GM12878 (cell line): ENCODE measurements at regions of chr5 and their contacts with region 1.

Region 1: GRCh38 chr5:127572930-127573329 is 55.5 kb downstream of the PRRC1 start:
- DNase-seq: no peak
- ATAC-seq: peak; percentile 62
- H3K4me3 ChIP-seq: no peak overlapping the region
- H3K27ac ChIP-seq: no peak overlapping the region
- H3K4me1 ChIP-seq: peaks cover 18% of the 10 kb centered on the region
- H3K27me3 ChIP-seq: no peaks in the 10 kb centered on the region
- CTCF ChIP-seq: peak; percentile 7 to 33 (median 17); a peak in 2 of 6 replicates
- EP300 ChIP-seq: no peak
- POLR2A ChIP-seq: no peak
- RAD21 ChIP-seq: peak; percentile 32; the same call in 1 of the 2 replicates

Region 2: DNA sequence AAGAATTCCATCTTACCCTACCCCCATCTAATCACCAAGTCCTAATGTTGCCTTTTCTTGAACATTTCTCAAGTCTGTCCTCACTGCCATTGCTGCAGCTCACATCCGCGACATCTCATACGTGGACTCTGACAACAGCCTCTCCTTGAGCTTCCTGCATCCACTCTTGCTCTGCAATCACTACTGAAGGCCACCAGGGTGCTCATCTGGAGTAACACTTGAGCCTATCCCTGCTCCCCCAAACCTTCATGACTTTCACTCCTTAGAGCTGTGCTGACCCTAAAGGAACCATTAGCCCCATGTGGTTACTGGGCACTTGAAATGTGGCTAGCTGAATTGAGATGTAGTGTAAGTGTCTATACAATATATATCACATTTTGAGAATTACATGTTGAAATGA is 29.6 kb after region 1 on chr5:
- CTCF ChIA-PET with region 1: interaction called, 10 read pairs
- POLR2A ChIA-PET with region 1: no interaction called
- RAD21 ChIA-PET with region 1: interaction called, 9 read pairs
- SMC1A ChIA-PET with region 1: interaction called, 14 read pairs
- in situ Hi-C with region 1: no loop called
- intact Hi-C with region 1: no loop called
- DNase-seq: no peak
- ATAC-seq: peak; percentile 38
- H3K4me3 ChIP-seq: no peak overlapping the region
- H3K27ac ChIP-seq: no peak overlapping the region
- H3K4me1 ChIP-seq: no peaks in the 10 kb centered on the region
- H3K27me3 ChIP-seq: 0 out of 4 replicates have a peak, but pooled peaks cover 0 to 3% of the 10 kb centered on the region in 2 experiments
- CTCF ChIP-seq: no peak
- EP300 ChIP-seq: no peak
- POLR2A ChIP-seq: no peak
- RAD21 ChIP-seq: no peak

Region 3: GRCh38 chr5:127666043-127666716 is 93.2 kb after region 1 on chr5:
- CTCF ChIA-PET with region 1: interaction called, 3 read pairs
- POLR2A ChIA-PET with region 1: no interaction called
- RAD21 ChIA-PET with region 1: interaction called, 3 read pairs
- SMC1A ChIA-PET with region 1: interaction called, 11 read pairs
- in situ Hi-C with region 1: no loop called
- intact Hi-C with region 1: no loop called
- DNase-seq: no peak
- ATAC-seq: no peak
- H3K4me3 ChIP-seq: no peak overlapping the region
- H3K27ac ChIP-seq: no peak overlapping the region
- H3K4me1 ChIP-seq: no peaks in the 10 kb centered on the region
- H3K27me3 ChIP-seq: no peaks in the 10 kb centered on the region
- CTCF ChIP-seq: no peak
- EP300 ChIP-seq: no peak
- POLR2A ChIP-seq: no peak
- RAD21 ChIP-seq: no peak